Dorsolateral prefrontal cortex (tissue), 120 donors: ENCODE measurements at regions of chr5 and their contacts with region 1.

Region 1: DNA sequence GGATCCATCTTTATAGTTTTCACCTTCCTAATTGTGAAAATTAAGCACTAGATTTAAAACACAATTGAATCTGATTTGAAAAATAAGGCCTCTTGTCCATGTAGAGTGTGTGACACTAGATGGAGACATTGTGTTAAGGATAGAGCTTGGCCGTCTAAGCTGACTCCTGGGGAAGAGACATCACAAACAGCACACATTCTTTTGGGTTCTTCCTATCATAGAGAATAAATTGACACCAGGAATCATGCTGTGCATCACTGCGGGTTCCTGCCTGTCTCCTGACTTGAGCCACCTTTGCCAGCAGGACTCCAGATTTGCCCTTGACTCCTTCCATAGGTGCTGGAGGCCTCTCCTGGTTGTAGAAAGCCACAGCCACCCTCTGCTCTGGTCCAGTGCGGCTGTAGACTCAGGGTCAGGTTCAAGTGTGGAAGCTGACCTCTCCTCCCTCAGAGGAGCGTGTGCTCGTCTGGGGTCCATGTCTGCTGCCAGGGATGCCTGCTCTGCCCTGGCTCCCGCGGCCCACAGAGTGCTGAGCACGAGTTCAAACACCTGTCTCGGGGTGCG is 11.2 kb downstream of the ROPN1L start:
- DNase-seq: peak in 2 of 10 donors; percentile 30 to 47
- H3K4me3 ChIP-seq: no peak overlapping the region
- H3K27ac ChIP-seq: peak overlapping the region in 1 of 59 donors; percentile 59
- H3K27me3 ChIP-seq: no peaks in the 10 kb centered on the region
- CTCF ChIP-seq: peak; percentile 55 to 94 (median 78)

Region 2: GRCh38 chr5:10627160-10627701 is 174.4 kb after region 1 on chr5:
- intact Hi-C with region 1: loop called (anchors 1 to 2 kb)
- DNase-seq: no peak
- H3K4me3 ChIP-seq: peak overlapping the region; percentile 2 to 70 (median 47)
- H3K27ac ChIP-seq: peak overlapping the region in 56 of 59 donors; percentile 17 to 88 (median 74)
- H3K27me3 ChIP-seq: no peaks in the 10 kb centered on the region
- CTCF ChIP-seq: no peak